H1 (cell line): ENCODE measurements at regions of chr19 and their contacts with region 1.

Region 1: GRCh38 chr19:48190288-48190884 is 19.9 kb downstream of the ZSWIM9 start:
- DNase-seq: peak; percentile 91
- H3K4me3 ChIP-seq: peak overlapping the region in 1 of 4 experiments; percentile 27; a peak in 2 of 8 replicates
- H3K27ac ChIP-seq: peak overlapping the region; percentile 49; the same call in 1 of the 2 replicates
- H3K4me1 ChIP-seq: peaks cover 0 to 4% (median 2%) of the 10 kb centered on the region in 4 experiments; a peak in 3 of 7 replicates
- H3K27me3 ChIP-seq: no peaks in the 10 kb centered on the region
- CTCF ChIP-seq: peak; percentile 63 to 78 (median 75)
- EP300 ChIP-seq: no peak
- POLR2A ChIP-seq: 0 out of 3 replicates have a peak, but pooled peaks of 1 of the 2 experiments have one; percentile 43
- RAD21 ChIP-seq: peak; percentile 36 to 44; a peak in 3 of 4 replicates

Region 2: DNA sequence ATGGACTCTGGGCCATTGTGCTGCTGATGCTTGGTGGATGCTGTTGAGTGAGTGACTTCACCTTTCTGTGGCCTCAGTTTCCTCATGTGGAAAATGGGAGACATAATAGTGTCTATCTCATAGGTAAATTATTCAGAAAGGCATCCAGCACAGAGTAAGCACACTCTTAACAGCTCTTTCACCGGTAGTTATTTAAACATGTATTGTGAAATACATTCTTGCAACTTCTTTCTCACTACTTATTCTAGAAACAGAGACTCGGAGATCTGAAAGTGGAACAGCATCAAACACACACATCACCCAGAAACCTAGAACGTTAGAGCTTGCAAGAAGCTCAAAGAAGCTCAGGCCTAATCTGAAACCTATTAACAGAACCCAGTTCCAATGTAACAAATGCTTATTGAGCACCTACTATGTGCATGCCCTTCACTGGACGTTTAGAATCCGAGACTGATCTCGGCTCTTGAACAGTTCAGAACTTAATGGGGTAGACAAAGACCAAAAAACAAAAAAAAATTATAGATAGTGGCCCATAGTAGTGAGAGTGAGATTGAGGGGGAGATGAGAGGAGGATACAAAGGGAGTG is 15.8 kb before region 1 on chr19:
- CTCF ChIA-PET with region 1: interaction called, 11 read pairs
- POLR2A ChIA-PET with region 1: interaction called, 7 read pairs
- DNase-seq: no peak
- H3K4me3 ChIP-seq: no peak overlapping the region
- H3K27ac ChIP-seq: no peak overlapping the region
- H3K4me1 ChIP-seq: peaks cover 0 to 7% (median 4%) of the 10 kb centered on the region in 4 experiments; a peak in 5 of 7 replicates
- H3K27me3 ChIP-seq: no peaks in the 10 kb centered on the region
- CTCF ChIP-seq: no peak
- EP300 ChIP-seq: no peak
- POLR2A ChIP-seq: no peak
- RAD21 ChIP-seq: no peak

Region 3: GRCh38 chr19:48203732-48204628 is 13.6 kb after region 1 on chr19:
- CTCF ChIA-PET with region 1: interaction called, 48 read pairs
- POLR2A ChIA-PET with region 1: interaction called, 14 read pairs
- DNase-seq: peak; percentile 94 to 96
- H3K4me3 ChIP-seq: peak overlapping the region; percentile 53 to 68 (median 58)
- H3K27ac ChIP-seq: peak overlapping the region; percentile 81
- H3K4me1 ChIP-seq: peaks cover 0 to 7% (median 1%) of the 10 kb centered on the region in 4 experiments; a peak in 2 of 7 replicates
- H3K27me3 ChIP-seq: no peaks in the 10 kb centered on the region; a peak in 1 of 7 replicates
- CTCF ChIP-seq: no peak
- EP300 ChIP-seq: no peak
- POLR2A ChIP-seq: peak; percentile 63 to 75
- RAD21 ChIP-seq: no peak

Region 4: GRCh38 chr19:48218997-48219396 is 28.6 kb after region 1 on chr19:
- CTCF ChIA-PET with region 1: interaction called, 10 read pairs
- POLR2A ChIA-PET with region 1: interaction called, 3 read pairs
- DNase-seq: no peak
- H3K4me3 ChIP-seq: no peak overlapping the region
- H3K27ac ChIP-seq: no peak overlapping the region
- H3K4me1 ChIP-seq: no peaks in the 10 kb centered on the region; a peak in 1 of 7 replicates
- H3K27me3 ChIP-seq: no peaks in the 10 kb centered on the region
- CTCF ChIP-seq: no peak
- EP300 ChIP-seq: no peak
- POLR2A ChIP-seq: no peak
- RAD21 ChIP-seq: no peak

Region 5: DNA sequence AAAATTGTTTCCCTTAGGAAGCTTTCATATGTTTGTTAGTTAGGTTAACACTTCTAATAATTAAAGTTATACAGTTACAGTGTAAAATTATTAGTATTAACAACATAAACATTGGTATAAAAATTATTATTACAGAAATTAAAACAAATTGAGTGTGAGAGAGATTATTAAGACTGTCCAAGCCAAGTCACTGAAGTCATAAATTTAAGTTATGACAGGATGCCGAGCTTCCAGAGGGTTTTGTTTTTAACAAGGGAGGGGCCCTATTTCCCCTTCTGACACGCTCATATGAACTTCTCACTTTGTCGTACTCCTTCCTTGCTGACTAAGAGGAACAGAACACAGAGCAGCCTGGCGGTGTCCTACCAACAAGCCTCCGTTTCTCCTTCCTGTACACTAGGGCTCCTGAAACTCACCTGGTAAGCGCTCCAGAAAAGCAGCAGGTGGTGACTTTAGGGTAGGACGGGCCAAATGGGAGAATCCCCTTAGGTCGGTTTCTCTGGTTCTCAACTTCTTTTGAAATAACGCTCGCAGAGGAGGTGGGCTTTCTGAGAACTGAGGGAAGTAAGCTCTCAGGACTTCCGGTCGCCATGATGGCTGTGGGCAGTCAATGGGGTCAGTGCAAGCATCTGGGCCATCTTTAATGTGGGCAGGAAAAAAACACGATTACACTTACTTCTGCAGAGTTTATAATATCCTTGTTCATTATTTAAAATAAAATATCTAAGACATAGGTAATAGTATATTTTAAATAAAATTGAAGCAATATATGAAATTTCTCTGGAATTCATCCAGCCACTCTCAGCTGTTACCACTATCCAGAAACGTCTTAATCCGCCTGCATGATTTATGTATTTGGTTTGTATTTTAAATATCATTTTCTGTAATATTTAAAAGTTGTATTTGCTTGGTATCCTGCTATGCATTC is 65.3 kb after region 1 on chr19 and contains the start of gene CARD8:
- CTCF ChIA-PET with region 1: interaction called, 12 read pairs
- POLR2A ChIA-PET with region 1: interaction called, 3 read pairs
- DNase-seq: peak; percentile 53 to 70
- H3K4me3 ChIP-seq: peak within 1 kb of the TSS; percentile 66 to 83 (median 78)
- H3K27ac ChIP-seq: peak within 1 kb of the TSS; percentile 74
- H3K4me1 ChIP-seq: no peaks in the 10 kb centered on the region
- H3K27me3 ChIP-seq: no peaks in the 10 kb centered on the region
- CTCF ChIP-seq: no peak
- EP300 ChIP-seq: no peak
- POLR2A ChIP-seq: peak; percentile 62 to 87
- RAD21 ChIP-seq: no peak
- total RNA-seq, gene CARD8: 24.4 and 26.2 TPM in 2 replicates

Region 6: DNA sequence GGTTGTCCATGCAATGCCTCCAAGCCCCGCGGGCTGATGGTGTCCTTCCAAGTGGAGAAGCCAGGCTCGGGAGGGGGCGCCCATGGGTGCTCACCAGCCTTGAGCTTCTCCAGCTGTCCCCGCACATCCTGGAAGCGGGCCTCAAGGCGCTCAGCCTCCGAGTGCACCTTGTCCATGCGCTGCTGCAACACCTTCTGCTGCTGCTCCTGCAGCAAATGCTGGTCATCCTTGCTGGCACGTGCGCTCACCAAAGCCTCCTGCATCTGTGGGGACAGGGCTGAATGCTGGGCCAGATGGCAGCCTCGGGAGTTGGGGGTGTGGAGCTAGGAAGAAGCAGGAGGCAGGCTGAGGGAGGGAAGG is 112.2 kb after region 1 on chr19:
- CTCF ChIA-PET with region 1: no interaction called
- POLR2A ChIA-PET with region 1: no interaction called
- DNase-seq: no peak
- H3K4me3 ChIP-seq: no peak overlapping the region
- H3K27ac ChIP-seq: no peak overlapping the region
- H3K4me1 ChIP-seq: peaks cover 0 to 2% (median 0%) of the 10 kb centered on the region in 4 experiments; a peak in 1 of 7 replicates
- H3K27me3 ChIP-seq: no peaks in the 10 kb centered on the region
- CTCF ChIP-seq: no peak
- EP300 ChIP-seq: no peak
- POLR2A ChIP-seq: no peak
- RAD21 ChIP-seq: no peak